ENCODE measurements at regions of chr3 and their contacts with region 1.

Region 1: GRCh38 chr3:85100316-85100715 is 141.5 kb downstream of the CADM2 start:
- DNase-seq: no peak
- ATAC-seq: no peak
- H3K4me3 ChIP-seq: no peak overlapping the region
- H3K27ac ChIP-seq: no peak overlapping the region
- H3K4me1 ChIP-seq: no peaks in the 10 kb centered on the region
- H3K27me3 ChIP-seq: no peaks in the 10 kb centered on the region
- CTCF ChIP-seq: no peak
- POLR2A ChIP-seq: no peak

Region 2: GRCh38 chr3:85050821-85051220 is 49.5 kb before region 1 on chr3:
- intact Hi-C with region 1: loop called in 1 of 10 experiments (anchors 2 kb)
- DNase-seq: no peak
- ATAC-seq: no peak
- H3K4me3 ChIP-seq: no peak overlapping the region
- H3K27ac ChIP-seq: no peak overlapping the region
- H3K4me1 ChIP-seq: no peaks in the 10 kb centered on the region
- H3K27me3 ChIP-seq: no peaks in the 10 kb centered on the region
- CTCF ChIP-seq: no peak
- POLR2A ChIP-seq: no peak

Region 3: GRCh38 chr3:85182975-85183752 is 82.8 kb after region 1 on chr3:
- intact Hi-C with region 1: no loop called
- DNase-seq: no peak
- ATAC-seq: no peak
- H3K4me3 ChIP-seq: no peak overlapping the region
- H3K27ac ChIP-seq: no peak overlapping the region
- H3K4me1 ChIP-seq: no peaks in the 10 kb centered on the region
- H3K27me3 ChIP-seq: no peaks in the 10 kb centered on the region
- CTCF ChIP-seq: no peak
- POLR2A ChIP-seq: no peak

Region 4: DNA sequence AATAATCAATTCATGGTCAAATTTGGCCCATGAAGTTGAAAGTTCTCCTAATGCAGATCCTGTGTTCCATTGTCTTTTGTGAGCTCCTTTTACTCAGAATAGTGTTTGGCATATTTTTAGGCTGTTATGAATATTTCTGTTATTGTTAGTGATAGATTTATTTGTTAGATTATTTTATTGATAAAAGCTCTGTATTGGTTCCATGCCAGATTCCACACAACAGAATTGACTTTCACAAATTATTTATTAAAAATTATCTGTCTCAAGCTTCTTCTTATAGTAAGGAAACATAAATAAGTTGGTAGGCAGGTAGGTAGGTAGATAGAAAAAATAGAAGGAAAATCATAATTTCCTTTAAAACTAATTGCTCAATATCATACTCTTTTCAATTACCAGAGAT is 415.8 kb after region 1 on chr3:
- intact Hi-C with region 1: loop called in 1 of 10 experiments (anchors 5 kb)
- DNase-seq: no peak
- ATAC-seq: no peak
- H3K4me3 ChIP-seq: no peak overlapping the region
- H3K27ac ChIP-seq: no peak overlapping the region
- H3K4me1 ChIP-seq: no peaks in the 10 kb centered on the region
- H3K27me3 ChIP-seq: no peaks in the 10 kb centered on the region
- CTCF ChIP-seq: no peak
- POLR2A ChIP-seq: no peak